A673 (cell line): ENCODE measurements at regions of chr20 and their contacts with region 1.

Region 1: DNA sequence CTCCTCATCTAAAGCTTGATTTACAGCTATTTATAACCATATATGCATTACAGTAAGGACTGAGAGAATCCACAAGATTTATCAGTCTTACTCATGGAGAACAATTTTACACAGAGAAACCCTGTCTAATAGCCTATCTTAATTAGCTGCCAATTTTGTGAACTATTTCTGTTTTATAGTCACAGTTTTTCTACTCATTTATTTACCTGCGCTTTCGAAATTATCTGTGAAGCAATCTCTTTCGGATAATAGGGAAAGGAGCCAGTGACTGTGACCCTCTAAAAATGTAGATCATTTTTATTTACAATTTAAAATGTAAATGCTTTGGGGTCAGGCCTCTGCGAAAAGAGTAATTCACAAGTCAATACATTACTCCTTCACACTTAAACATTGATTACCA is 98.1 kb downstream of the TSHZ2 start:
- DNase-seq: no peak
- H3K4me3 ChIP-seq: no peak overlapping the region
- H3K27ac ChIP-seq: no peak overlapping the region
- H3K4me1 ChIP-seq: peaks cover 30% of the 10 kb centered on the region
- H3K27me3 ChIP-seq: no peaks in the 10 kb centered on the region
- CTCF ChIP-seq: no peak

Region 2: GRCh38 chr20:52837378-52837777 is 232.8 kb before region 1 on chr20:
- CTCF ChIA-PET with region 1: no interaction called
- POLR2A ChIA-PET with region 1: no interaction called
- intact Hi-C with region 1: no loop called
- DNase-seq: peak; percentile 19
- H3K4me3 ChIP-seq: no peak overlapping the region
- H3K27ac ChIP-seq: no peak overlapping the region
- H3K4me1 ChIP-seq: no peaks in the 10 kb centered on the region
- H3K27me3 ChIP-seq: no peaks in the 10 kb centered on the region
- CTCF ChIP-seq: no peak

Region 3: GRCh38 chr20:53032478-53032932 is 37.7 kb before region 1 on chr20:
- CTCF ChIA-PET with region 1: no interaction called
- POLR2A ChIA-PET with region 1: no interaction called
- intact Hi-C with region 1: no loop called
- DNase-seq: peak; percentile 54
- H3K4me3 ChIP-seq: no peak overlapping the region
- H3K27ac ChIP-seq: no peak overlapping the region
- H3K4me1 ChIP-seq: peaks cover 10% of the 10 kb centered on the region
- H3K27me3 ChIP-seq: no peaks in the 10 kb centered on the region
- CTCF ChIP-seq: no peak

Region 4: GRCh38 chr20:53059848-53060247 is 10.4 kb before region 1 on chr20:
- CTCF ChIA-PET with region 1: no interaction called
- POLR2A ChIA-PET with region 1: interaction called, 11 read pairs
- intact Hi-C with region 1: no loop called
- DNase-seq: no peak
- H3K4me3 ChIP-seq: no peak overlapping the region
- H3K27ac ChIP-seq: no peak overlapping the region
- H3K4me1 ChIP-seq: peaks cover 15% of the 10 kb centered on the region
- H3K27me3 ChIP-seq: no peaks in the 10 kb centered on the region
- CTCF ChIP-seq: no peak

Region 5: DNA sequence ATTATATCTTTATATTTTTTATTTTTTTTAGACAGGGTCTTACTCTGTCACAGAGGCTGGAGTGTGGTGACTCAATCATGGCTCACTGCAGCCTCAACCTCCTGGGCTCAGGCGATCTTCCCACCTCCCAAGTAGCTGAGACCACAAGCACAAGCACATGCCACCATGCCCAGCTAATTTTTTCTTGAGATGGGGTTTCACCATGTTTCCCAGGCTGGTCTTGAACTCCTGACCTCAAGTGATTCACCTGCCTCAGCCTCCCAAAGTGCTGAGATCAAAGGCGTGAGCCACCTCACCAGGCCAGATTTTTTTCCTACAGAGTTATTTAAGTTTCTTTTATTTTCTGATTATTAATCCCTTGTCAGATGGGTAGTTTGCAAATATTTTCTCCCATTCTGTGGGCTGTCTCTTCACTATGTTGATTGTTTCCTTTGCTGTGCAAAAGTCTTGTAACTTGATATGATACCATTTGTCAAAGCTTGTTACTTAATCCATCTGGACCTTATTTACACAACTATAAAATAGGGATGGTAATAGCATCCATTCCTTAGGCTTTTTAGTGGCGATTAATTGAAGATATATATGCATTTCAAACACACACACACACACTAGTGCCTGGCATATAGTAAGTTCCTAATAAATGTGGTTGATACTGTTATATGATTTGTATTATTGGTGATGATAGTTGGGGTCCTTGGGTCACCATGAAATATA is 813.0 kb after region 1 on chr20:
- CTCF ChIA-PET with region 1: no interaction called
- POLR2A ChIA-PET with region 1: no interaction called
- intact Hi-C with region 1: no loop called
- DNase-seq: no peak
- H3K4me3 ChIP-seq: no peak overlapping the region
- H3K27ac ChIP-seq: no peak overlapping the region
- H3K4me1 ChIP-seq: peaks cover 13% of the 10 kb centered on the region
- H3K27me3 ChIP-seq: no peaks in the 10 kb centered on the region
- CTCF ChIP-seq: no peak